ENCODE measurements at regions of chr9 and their contacts with region 1.

Region 1: DNA sequence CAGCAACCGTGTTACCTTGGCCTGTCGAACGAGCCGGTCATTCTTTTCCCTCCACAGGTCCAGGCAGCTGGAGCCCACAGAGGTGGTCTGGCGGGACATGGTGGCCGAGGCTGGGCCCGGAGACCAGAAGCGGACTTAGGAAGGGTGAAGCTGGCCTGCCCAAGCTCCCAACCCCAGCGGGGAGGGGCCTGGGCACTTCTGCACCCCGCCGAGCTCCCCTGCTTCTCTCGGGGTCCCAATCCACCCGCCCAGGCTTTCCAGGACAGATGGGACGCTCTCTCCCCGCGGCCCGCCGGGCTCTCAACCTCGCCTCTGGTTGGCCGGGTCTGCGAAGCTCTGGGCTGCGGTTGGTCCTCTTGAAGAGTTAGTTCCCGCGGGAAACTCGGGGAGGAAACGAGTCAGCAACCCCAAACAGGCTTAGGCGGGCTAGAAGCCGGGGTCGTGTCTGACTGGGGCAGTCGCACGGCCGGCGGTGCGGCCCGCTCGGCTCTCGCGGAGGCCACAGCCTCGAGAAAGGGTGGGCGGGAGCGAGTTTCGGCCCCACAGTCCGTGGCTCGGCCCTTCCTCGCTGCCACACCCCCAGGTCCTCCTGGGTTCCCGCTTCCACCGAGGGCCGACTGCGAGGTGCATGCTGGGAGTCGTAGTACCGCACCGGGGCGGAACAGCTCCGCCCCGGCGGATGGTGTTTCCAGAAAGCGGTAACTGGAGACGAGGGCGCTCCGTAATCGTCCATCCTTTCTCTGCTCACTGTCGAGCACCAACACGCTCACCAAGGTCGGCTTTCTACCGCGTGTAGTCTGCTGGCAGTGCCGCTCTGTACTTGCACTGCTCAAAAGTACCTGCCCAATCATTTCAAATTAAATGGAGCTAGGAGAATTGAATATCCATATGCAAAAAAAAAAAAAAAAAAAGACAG is at the start of gene FANCG:
- DNase-seq: peak; percentile 80
- ATAC-seq: peak; percentile 92
- H3K4me3 Mint-ChIP-seq: peak within 1 kb of the TSS; percentile 88
- H3K27ac Mint-ChIP-seq: peak within 1 kb of the TSS; percentile 74
- H3K4me1 Mint-ChIP-seq: peaks cover 22% of the 10 kb centered on the region
- H3K27me3 Mint-ChIP-seq: no peaks in the 10 kb centered on the region
- CTCF ChIP-seq: no peak
- total RNA-seq, gene FANCG: 27.4 and 28.8 TPM in 2 replicates

Region 2: DNA sequence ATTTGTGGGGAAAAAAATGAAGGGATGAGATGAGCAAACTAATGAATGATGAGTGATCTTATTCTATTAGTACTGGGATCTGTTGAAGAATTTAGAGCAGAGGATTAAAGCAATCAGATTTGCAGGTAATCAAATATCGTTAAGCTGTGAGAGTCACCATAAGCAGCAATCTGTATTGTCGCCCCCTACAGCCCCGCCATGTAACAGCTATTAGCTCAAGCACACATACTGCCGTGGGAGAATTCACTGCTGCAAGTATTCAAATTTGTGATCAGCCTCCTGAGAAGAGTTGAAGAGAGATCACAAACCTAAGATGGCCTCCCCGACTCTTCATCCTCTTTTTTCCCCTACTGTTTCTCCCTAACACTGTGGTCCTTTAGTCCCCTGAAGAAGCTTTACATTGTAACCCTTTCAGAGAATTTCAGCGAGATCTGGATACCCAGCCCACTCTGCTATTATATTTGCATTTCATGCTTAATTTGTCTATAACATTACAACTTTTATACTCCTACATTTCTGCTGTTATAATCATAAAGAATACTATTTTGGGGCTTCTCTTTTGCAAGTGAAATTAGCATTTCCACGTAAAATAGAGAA is 150.1 kb before region 1 on chr9:
- CTCF ChIA-PET with region 1: no interaction called
- POLR2A ChIA-PET with region 1: no interaction called
- intact Hi-C with region 1: no loop called
- DNase-seq: no peak
- ATAC-seq: peak; percentile 25
- H3K4me3 Mint-ChIP-seq: no peak overlapping the region
- H3K27ac Mint-ChIP-seq: no peak overlapping the region
- H3K4me1 Mint-ChIP-seq: peaks cover 2% of the 10 kb centered on the region
- H3K27me3 Mint-ChIP-seq: peaks cover 39% of the 10 kb centered on the region
- CTCF ChIP-seq: no peak

Region 3: DNA sequence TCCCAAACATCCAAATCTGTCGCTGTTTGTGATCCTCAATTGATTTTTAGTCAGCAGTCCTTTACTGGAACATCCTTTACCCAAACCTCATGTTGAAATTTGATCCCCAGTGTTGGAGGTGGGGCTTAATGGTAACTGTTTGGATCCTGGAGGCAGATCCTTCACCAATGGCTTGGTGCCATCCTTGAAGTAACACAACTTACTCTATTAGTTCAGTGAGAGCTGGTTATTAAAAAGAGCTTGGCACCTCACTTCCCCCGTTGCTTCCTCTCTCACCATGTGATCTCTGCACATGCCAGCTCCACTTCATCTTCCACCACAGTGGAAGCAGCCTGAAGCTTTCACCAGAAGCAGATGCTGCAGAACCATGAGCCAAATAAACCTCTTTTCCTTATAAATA is 49.8 kb before region 1 on chr9:
- CTCF ChIA-PET with region 1: no interaction called
- POLR2A ChIA-PET with region 1: interaction called, 14 read pairs
- intact Hi-C with region 1: no loop called
- DNase-seq: no peak
- ATAC-seq: no peak
- H3K4me3 Mint-ChIP-seq: no peak overlapping the region
- H3K27ac Mint-ChIP-seq: no peak overlapping the region
- H3K4me1 Mint-ChIP-seq: peaks cover 7% of the 10 kb centered on the region
- H3K27me3 Mint-ChIP-seq: no peaks in the 10 kb centered on the region
- CTCF ChIP-seq: no peak

Region 4: GRCh38 chr9:35096035-35096849 is 16.6 kb after region 1 on chr9 and contains the start of gene PIGO:
- CTCF ChIA-PET with region 1: interaction called, 9 read pairs
- POLR2A ChIA-PET with region 1: interaction called, 34 read pairs
- intact Hi-C with region 1: loop called (anchors 1 kb)
- DNase-seq: peak; percentile 81
- ATAC-seq: peak; percentile 92
- H3K4me3 Mint-ChIP-seq: peak within 1 kb of the TSS; percentile 87
- H3K27ac Mint-ChIP-seq: peak within 1 kb of the TSS; percentile 93
- H3K4me1 Mint-ChIP-seq: peaks cover 30% of the 10 kb centered on the region
- H3K27me3 Mint-ChIP-seq: no peaks in the 10 kb centered on the region
- CTCF ChIP-seq: peak; percentile 60
- total RNA-seq, gene PIGO: 30.4 and 34.1 TPM in 2 replicates

Region 5: GRCh38 chr9:35102926-35103659 is 23.4 kb after region 1 on chr9 and contains the start of gene STOML2:
- CTCF ChIA-PET with region 1: interaction called, 4 read pairs
- POLR2A ChIA-PET with region 1: interaction called, 37 read pairs
- intact Hi-C with region 1: loop called (anchors 1 kb)
- DNase-seq: peak; percentile 82
- ATAC-seq: peak; percentile 97
- H3K4me3 Mint-ChIP-seq: peak within 1 kb of the TSS; percentile 97
- H3K27ac Mint-ChIP-seq: peak within 1 kb of the TSS; percentile 97
- H3K4me1 Mint-ChIP-seq: peaks cover 25% of the 10 kb centered on the region
- H3K27me3 Mint-ChIP-seq: no peaks in the 10 kb centered on the region
- CTCF ChIP-seq: no peak
- total RNA-seq, gene STOML2: 108 and 113 TPM in 2 replicates

Region 6: GRCh38 chr9:35111001-35111933 is 31.6 kb after region 1 on chr9:
- CTCF ChIA-PET with region 1: interaction called, 3 read pairs
- POLR2A ChIA-PET with region 1: interaction called, 24 read pairs
- intact Hi-C with region 1: loop called (anchors 1 kb)
- DNase-seq: peak; percentile 86
- ATAC-seq: peak; percentile 81
- H3K4me3 Mint-ChIP-seq: peak overlapping the region; percentile 83
- H3K27ac Mint-ChIP-seq: peak overlapping the region; percentile 88
- H3K4me1 Mint-ChIP-seq: peaks cover 62% of the 10 kb centered on the region
- H3K27me3 Mint-ChIP-seq: no peaks in the 10 kb centered on the region
- CTCF ChIP-seq: no peak

Measured in activated B cell treated with CpG ODN at 0.5 μM for 24 hours (primary cell).